GM12878 (cell line): ENCODE measurements at regions of chr5 and their contacts with region 1.

Region 1: DNA sequence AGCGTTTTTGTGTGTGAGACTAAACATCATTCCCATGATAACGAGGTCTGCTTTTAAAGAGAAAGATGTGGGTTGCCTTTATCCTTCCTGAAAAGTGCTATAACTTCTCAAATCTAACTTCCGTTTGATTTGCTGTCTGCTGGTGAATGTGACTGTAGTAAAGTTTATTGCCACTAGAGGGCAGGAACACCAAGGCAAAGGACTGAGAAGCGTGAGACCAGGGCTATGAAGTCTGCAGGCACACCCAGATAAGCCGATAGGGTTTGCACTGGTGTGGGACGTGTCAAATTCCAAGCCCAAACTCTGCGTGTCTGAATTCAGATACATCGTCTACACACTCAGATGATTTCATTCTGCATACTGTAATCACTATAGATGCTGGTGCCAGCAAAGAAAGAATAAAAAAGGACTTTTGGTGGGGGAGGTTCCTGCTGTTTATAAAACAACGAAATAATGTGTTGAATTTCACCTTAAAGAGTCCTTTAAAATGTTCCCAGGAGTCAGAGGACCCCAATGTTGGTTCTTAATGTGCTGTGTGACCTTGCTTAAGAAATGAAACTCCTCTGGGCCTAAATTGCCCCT is 87.2 kb downstream of the PTTG1 start:
- DNase-seq: peak; percentile 76
- ATAC-seq: peak; percentile 88
- H3K4me3 ChIP-seq: no peak overlapping the region
- H3K27ac ChIP-seq: no peak overlapping the region
- H3K4me1 ChIP-seq: peaks cover 15% of the 10 kb centered on the region; the same call in 1 of the 2 replicates
- H3K27me3 ChIP-seq: no peaks in the 10 kb centered on the region
- CTCF ChIP-seq: peak; percentile 76 to 94 (median 92)
- EP300 ChIP-seq: no peak
- POLR2A ChIP-seq: no peak
- RAD21 ChIP-seq: peak; percentile 99

Region 2: GRCh38 chr5:160458806-160459800 is 49.8 kb before region 1 on chr5:
- CTCF ChIA-PET with region 1: interaction called, 8 read pairs
- POLR2A ChIA-PET with region 1: interaction called, 7 read pairs
- RAD21 ChIA-PET with region 1: interaction called, 50 read pairs
- SMC1A ChIA-PET with region 1: interaction called, 14 read pairs
- in situ Hi-C with region 1: no loop called
- intact Hi-C with region 1: no loop called
- DNase-seq: peak; percentile 92
- ATAC-seq: peak; percentile 77
- H3K4me3 ChIP-seq: no peak overlapping the region
- H3K27ac ChIP-seq: peak overlapping the region; percentile 70
- H3K4me1 ChIP-seq: peaks cover 45% of the 10 kb centered on the region
- H3K27me3 ChIP-seq: no peaks in the 10 kb centered on the region
- CTCF ChIP-seq: no peak
- EP300 ChIP-seq: peak; percentile 92 to 98; a peak in 3 of 4 replicates
- POLR2A ChIP-seq: peak; percentile 60; the same call in 1 of the 2 replicates
- RAD21 ChIP-seq: no peak

Region 3: GRCh38 chr5:160486573-160486972 is 22.3 kb before region 1 on chr5:
- CTCF ChIA-PET with region 1: interaction called, 29 read pairs
- POLR2A ChIA-PET with region 1: interaction called, 4 read pairs
- RAD21 ChIA-PET with region 1: interaction called, 4 read pairs
- SMC1A ChIA-PET with region 1: interaction called, 9 read pairs
- in situ Hi-C with region 1: no loop called
- intact Hi-C with region 1: no loop called
- DNase-seq: no peak
- ATAC-seq: peak; percentile 82
- H3K4me3 ChIP-seq: no peak overlapping the region
- H3K27ac ChIP-seq: peak overlapping the region; percentile 53
- H3K4me1 ChIP-seq: peaks cover 21% of the 10 kb centered on the region
- H3K27me3 ChIP-seq: no peaks in the 10 kb centered on the region
- CTCF ChIP-seq: no peak
- EP300 ChIP-seq: peak; percentile 29 to 52; a peak in 2 of 4 replicates
- POLR2A ChIP-seq: no peak
- RAD21 ChIP-seq: no peak

Region 4: GRCh38 chr5:160787240-160787639 is 278.4 kb after region 1 on chr5:
- CTCF ChIA-PET with region 1: interaction called, 10 read pairs
- POLR2A ChIA-PET with region 1: no interaction called
- RAD21 ChIA-PET with region 1: interaction called, 15 read pairs
- SMC1A ChIA-PET with region 1: interaction called, 5 read pairs
- in situ Hi-C with region 1: loop called (anchors 10 kb)
- intact Hi-C with region 1: loop called (anchors 2 kb)
- DNase-seq: peak; percentile 17
- ATAC-seq: peak; percentile 88
- H3K4me3 ChIP-seq: no peak overlapping the region
- H3K27ac ChIP-seq: no peak overlapping the region
- H3K4me1 ChIP-seq: no peaks in the 10 kb centered on the region
- H3K27me3 ChIP-seq: no peaks in the 10 kb centered on the region
- CTCF ChIP-seq: peak; percentile 47 to 55 (median 51); a peak in 5 of 6 replicates
- EP300 ChIP-seq: no peak
- POLR2A ChIP-seq: no peak
- RAD21 ChIP-seq: peak; percentile 59

Region 5: DNA sequence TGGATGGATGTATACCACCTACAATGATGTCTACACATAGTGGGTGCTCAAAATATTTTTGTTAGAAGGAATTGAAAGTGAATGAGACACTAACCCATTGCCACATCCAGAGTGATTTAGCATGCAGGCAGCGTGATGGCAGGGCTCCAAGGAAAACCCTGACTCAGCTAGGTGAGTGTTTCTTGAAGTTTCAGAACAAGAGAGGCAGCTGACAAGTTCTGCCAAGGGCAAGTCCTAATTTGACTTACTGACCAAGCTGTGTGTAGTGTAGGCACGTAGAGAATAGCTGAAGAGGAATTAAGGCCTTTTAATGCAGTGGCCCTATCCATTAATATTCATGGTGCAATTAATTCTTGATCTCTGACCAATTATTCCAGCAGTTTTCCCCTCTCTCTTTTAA is 450.9 kb after region 1 on chr5:
- CTCF ChIA-PET with region 1: no interaction called
- POLR2A ChIA-PET with region 1: no interaction called
- RAD21 ChIA-PET with region 1: no interaction called
- SMC1A ChIA-PET with region 1: interaction called, 3 read pairs
- in situ Hi-C with region 1: no loop called
- intact Hi-C with region 1: loop called (anchors 10 kb)
- DNase-seq: peak; percentile 62
- ATAC-seq: peak; percentile 76
- H3K4me3 ChIP-seq: no peak overlapping the region
- H3K27ac ChIP-seq: no peak overlapping the region
- H3K4me1 ChIP-seq: no peaks in the 10 kb centered on the region; the same call in 1 of the 2 replicates
- H3K27me3 ChIP-seq: no peaks in the 10 kb centered on the region
- CTCF ChIP-seq: no peak
- EP300 ChIP-seq: 0 out of 4 replicates have a peak, but pooled peaks of 1 of the 2 experiments have one; percentile 12
- POLR2A ChIP-seq: no peak
- RAD21 ChIP-seq: no peak